ENCODE measurements at regions of chr5 and their contacts with region 1.

Region 1: GRCh38 chr5:23466401-23466912 is 41.0 kb upstream of the PRDM9 start:
- DNase-seq: peak; percentile 99
- H3K4me3 ChIP-seq: no peak overlapping the region
- H3K27ac ChIP-seq: peak overlapping the region; percentile 89
- H3K4me1 ChIP-seq: peaks cover 10% of the 10 kb centered on the region
- H3K27me3 ChIP-seq: no peaks in the 10 kb centered on the region
- CTCF ChIP-seq: no peak

Region 2: GRCh38 chr5:23314827-23315226 is 151.6 kb before region 1 on chr5:
- CTCF ChIA-PET with region 1: no interaction called
- dilution Hi-C with region 1: no loop called
- in situ Hi-C with region 1: no loop called
- intact Hi-C with region 1: loop called (anchors 5 kb)
- DNase-seq: peak; percentile 84
- H3K4me3 ChIP-seq: no peak overlapping the region
- H3K27ac ChIP-seq: peak overlapping the region; percentile 56
- H3K4me1 ChIP-seq: peaks cover 35% of the 10 kb centered on the region
- H3K27me3 ChIP-seq: no peaks in the 10 kb centered on the region
- CTCF ChIP-seq: no peak

Region 3: GRCh38 chr5:23343121-23343520 is 123.3 kb before region 1 on chr5:
- CTCF ChIA-PET with region 1: no interaction called
- dilution Hi-C with region 1: no loop called
- in situ Hi-C with region 1: no loop called
- intact Hi-C with region 1: no loop called
- DNase-seq: no peak
- H3K4me3 ChIP-seq: no peak overlapping the region
- H3K27ac ChIP-seq: no peak overlapping the region
- H3K4me1 ChIP-seq: no peaks in the 10 kb centered on the region
- H3K27me3 ChIP-seq: peaks cover 2% of the 10 kb centered on the region
- CTCF ChIP-seq: no peak

Region 4: GRCh38 chr5:23419115-23419514 is 47.3 kb before region 1 on chr5:
- CTCF ChIA-PET with region 1: no interaction called
- dilution Hi-C with region 1: no loop called
- in situ Hi-C with region 1: no loop called
- intact Hi-C with region 1: loop called (anchors 2 kb)
- DNase-seq: peak; percentile 83
- H3K4me3 ChIP-seq: no peak overlapping the region
- H3K27ac ChIP-seq: peak overlapping the region; percentile 26
- H3K4me1 ChIP-seq: peaks cover 6% of the 10 kb centered on the region
- H3K27me3 ChIP-seq: no peaks in the 10 kb centered on the region
- CTCF ChIP-seq: peak in 1 of 2 donors; percentile 39

Region 5: DNA sequence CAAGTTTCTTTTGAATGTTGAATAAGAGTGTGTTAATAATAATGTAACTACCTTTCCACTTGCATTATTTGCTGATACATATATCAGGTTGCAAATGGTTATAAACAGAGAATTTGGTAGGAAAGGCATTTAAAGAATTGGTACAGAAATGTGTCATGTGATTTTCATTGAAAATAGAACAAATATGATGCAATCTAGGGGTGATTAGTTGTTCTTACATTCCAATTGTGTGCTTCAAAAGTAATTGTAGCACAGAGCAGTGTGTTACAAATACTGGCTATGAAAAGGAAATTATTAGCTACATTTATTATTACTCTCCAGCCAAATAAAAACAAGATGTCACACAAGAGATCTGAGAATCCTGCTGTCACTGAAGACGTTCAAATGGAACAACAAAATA is 20.9 kb before region 1 on chr5:
- CTCF ChIA-PET with region 1: no interaction called
- dilution Hi-C with region 1: no loop called
- in situ Hi-C with region 1: no loop called
- intact Hi-C with region 1: loop called (anchors 1 kb)
- DNase-seq: peak; percentile 39
- H3K4me3 ChIP-seq: no peak overlapping the region
- H3K27ac ChIP-seq: no peak overlapping the region
- H3K4me1 ChIP-seq: peaks cover 7% of the 10 kb centered on the region
- H3K27me3 ChIP-seq: no peaks in the 10 kb centered on the region
- CTCF ChIP-seq: no peak

Measured in mammary epithelial cell (primary cell).